ENCODE measurements at regions of chr3 and their contacts with region 1.

Region 1: DNA sequence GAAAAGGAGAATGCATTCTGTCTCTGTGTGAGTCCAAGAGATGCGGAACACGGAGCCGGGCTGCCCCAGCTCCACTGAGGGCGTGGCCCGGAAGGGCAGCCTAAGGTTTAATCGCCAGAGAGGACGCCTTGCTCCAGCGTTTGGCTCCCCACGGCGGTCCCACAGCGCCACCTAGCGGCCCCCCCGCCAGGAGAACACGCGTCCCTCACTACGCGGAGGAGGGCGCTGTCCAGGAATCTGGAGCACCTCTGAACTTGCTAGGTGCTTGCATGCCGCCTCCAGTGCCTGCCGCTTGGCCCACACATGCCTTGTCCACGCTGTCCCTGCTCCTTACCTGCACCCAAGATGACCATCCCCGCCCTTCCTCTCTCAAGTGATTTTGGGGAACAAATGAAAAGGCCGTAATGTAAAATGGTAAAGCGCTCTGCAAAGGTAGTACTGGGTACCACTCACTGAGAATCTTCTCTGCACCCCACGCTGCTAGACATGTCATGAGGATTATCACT is 14.4 kb upstream of the MRPS22 start:
- DNase-seq: peak; percentile 90 to 94
- H3K4me3 ChIP-seq: peak overlapping the region in 2 of 4 donors; percentile 8 to 14
- H3K27ac ChIP-seq: no peak overlapping the region
- H3K4me1 ChIP-seq: peaks cover 0 to 9% (median 8%) of the 10 kb centered on the region in 4 donors
- H3K27me3 ChIP-seq: peaks cover 0 to 35% (median 12%) of the 10 kb centered on the region in 3 donors
- CTCF ChIP-seq: peak in 6 of 7 experiments; percentile 47 to 98 (median 94)
- EP300 ChIP-seq: no peak
- POLR2A ChIP-seq: no peak

Region 2: DNA sequence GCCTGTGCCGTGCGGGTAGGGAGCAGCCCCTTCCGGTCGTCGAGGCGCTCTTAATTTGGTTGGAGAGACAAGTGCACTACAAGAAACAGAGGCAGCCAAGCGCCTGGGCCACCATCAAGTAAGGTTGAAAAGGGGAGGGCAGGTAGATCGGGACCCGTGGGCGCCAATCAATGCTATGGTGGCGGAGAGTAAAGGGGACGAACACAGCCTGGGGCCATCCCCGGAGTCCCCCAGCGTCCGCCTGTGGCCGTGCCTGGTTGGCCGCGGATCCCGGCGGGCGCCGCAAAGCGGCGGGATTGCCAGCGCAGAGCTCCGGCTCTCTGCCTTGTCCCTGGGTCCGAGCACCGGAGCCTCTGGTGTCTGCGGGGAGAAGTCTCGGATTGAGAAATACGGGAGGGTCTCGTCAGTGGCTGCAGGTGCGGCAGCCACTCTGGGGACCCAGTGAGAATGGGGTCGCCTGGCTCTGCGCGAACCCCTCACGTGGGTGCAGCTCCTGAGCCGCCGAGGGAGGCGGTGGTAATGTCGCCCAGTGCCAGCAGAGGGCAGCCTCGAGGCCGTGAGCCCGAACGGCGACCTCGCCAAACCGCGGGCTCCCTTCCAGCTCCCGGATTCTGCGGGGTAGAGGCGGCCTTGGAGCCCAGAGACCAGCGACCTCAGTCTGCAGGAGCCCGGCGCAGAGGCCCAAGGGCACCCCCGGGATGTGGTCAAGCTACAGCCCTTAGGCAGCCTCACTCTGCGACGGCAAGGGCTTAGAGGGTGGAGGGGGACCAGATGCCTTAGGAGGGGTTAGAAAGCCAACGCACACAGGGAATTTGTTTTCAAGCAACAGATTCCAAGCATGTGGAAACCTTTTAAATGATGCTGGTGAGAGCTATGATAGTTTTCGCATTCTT is 393.3 kb before region 1 on chr3:
- intact Hi-C with region 1: loop called (anchors 10 kb)
- DNase-seq: peak; percentile 80 to 88
- H3K4me3 ChIP-seq: peak overlapping the region; percentile 23 to 47 (median 36)
- H3K27ac ChIP-seq: no peak overlapping the region
- H3K4me1 ChIP-seq: peaks cover 39 to 46% (median 44%) of the 10 kb centered on the region in 4 donors
- H3K27me3 ChIP-seq: peaks cover 39 to 71% (median 64%) of the 10 kb centered on the region in 3 donors
- CTCF ChIP-seq: peak in 5 of 7 experiments; percentile 61 to 96 (median 90)
- EP300 ChIP-seq: no peak
- POLR2A ChIP-seq: no peak

Region 3: GRCh38 chr3:139111392-139112229 is 217.8 kb before region 1 on chr3:
- intact Hi-C with region 1: loop called (anchors 2 kb)
- DNase-seq: peak; percentile 64 to 83
- H3K4me3 ChIP-seq: no peak overlapping the region
- H3K27ac ChIP-seq: no peak overlapping the region
- H3K4me1 ChIP-seq: peaks cover 0 to 8% (median 5%) of the 10 kb centered on the region in 4 donors
- H3K27me3 ChIP-seq: peaks cover 0 to 25% (median 3%) of the 10 kb centered on the region in 3 donors
- CTCF ChIP-seq: peak in 5 of 7 experiments; percentile 51 to 62 (median 59)
- EP300 ChIP-seq: no peak
- POLR2A ChIP-seq: no peak